ENCODE measurements at regions of chr5 and their contacts with region 1.

Region 1: GRCh38 chr5:89308606-89309040 is 425.6 kb upstream of the MEF2C start:
- DNase-seq: no peak
- ATAC-seq: no peak
- H3K4me3 ChIP-seq: no peak overlapping the region
- H3K27ac ChIP-seq: no peak overlapping the region
- H3K4me1 ChIP-seq: no peaks in the 10 kb centered on the region
- H3K27me3 ChIP-seq: no peaks in the 10 kb centered on the region
- CTCF ChIP-seq: no peak
- POLR2A ChIP-seq: no peak
- RAD21 ChIP-seq: no peak

Region 2: GRCh38 chr5:89324990-89325389 is 16.4 kb after region 1 on chr5:
- CTCF ChIA-PET with region 1: no interaction called
- POLR2A ChIA-PET with region 1: no interaction called
- dilution Hi-C with region 1: no loop called
- in situ Hi-C with region 1: no loop called
- intact Hi-C with region 1: no loop called
- DNase-seq: no peak
- ATAC-seq: no peak
- H3K4me3 ChIP-seq: no peak overlapping the region
- H3K27ac ChIP-seq: no peak overlapping the region
- H3K4me1 ChIP-seq: no peaks in the 10 kb centered on the region
- H3K27me3 ChIP-seq: no peaks in the 10 kb centered on the region
- CTCF ChIP-seq: no peak
- POLR2A ChIP-seq: no peak
- RAD21 ChIP-seq: no peak

Region 3: DNA sequence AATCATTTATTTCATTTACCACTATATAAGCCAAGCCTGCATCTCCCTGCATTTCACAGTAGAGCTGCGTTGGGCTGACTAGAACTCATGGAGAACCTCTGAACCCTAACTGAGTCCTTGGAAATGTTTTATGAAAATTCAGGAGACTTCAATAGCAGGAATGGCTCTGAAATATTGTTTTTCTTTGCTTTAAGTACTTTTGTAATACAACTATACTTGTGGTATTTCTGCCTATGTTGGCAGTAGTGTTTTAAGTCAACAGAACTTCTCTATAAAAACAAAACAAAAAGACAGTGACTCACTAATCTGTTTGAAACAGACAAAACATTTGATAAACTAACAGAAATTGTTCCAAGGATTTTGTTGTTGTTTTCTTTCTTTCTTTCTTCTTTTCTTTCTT is 63.6 kb after region 1 on chr5:
- CTCF ChIA-PET with region 1: no interaction called
- POLR2A ChIA-PET with region 1: no interaction called
- dilution Hi-C with region 1: no loop called
- in situ Hi-C with region 1: no loop called
- intact Hi-C with region 1: no loop called
- DNase-seq: no peak
- ATAC-seq: no peak
- H3K4me3 ChIP-seq: no peak overlapping the region
- H3K27ac ChIP-seq: no peak overlapping the region
- H3K4me1 ChIP-seq: no peaks in the 10 kb centered on the region
- H3K27me3 ChIP-seq: peaks cover 2% of the 10 kb centered on the region; the same call in 1 of the 2 replicates
- CTCF ChIP-seq: no peak
- POLR2A ChIP-seq: no peak
- RAD21 ChIP-seq: no peak

Region 4: GRCh38 chr5:89396278-89396954 is 87.8 kb after region 1 on chr5:
- CTCF ChIA-PET with region 1: no interaction called
- POLR2A ChIA-PET with region 1: no interaction called
- dilution Hi-C with region 1: no loop called
- in situ Hi-C with region 1: no loop called
- intact Hi-C with region 1: loop called (anchors 5 kb)
- DNase-seq: peak; percentile 9
- ATAC-seq: no peak
- H3K4me3 ChIP-seq: no peak overlapping the region
- H3K27ac ChIP-seq: no peak overlapping the region
- H3K4me1 ChIP-seq: 0 out of 2 replicates have a peak, but pooled peaks cover 2% of the 10 kb centered on the region
- H3K27me3 ChIP-seq: no peaks in the 10 kb centered on the region; the same call in 1 of the 2 replicates
- CTCF ChIP-seq: no peak
- POLR2A ChIP-seq: no peak
- RAD21 ChIP-seq: no peak

Measured in IMR-90 (cell line).